Activated B cell treated with CpG ODN at 0.5 μM for 24 hours (primary cell): ENCODE measurements at regions of chr1 and their contacts with region 1.

Region 1: DNA sequence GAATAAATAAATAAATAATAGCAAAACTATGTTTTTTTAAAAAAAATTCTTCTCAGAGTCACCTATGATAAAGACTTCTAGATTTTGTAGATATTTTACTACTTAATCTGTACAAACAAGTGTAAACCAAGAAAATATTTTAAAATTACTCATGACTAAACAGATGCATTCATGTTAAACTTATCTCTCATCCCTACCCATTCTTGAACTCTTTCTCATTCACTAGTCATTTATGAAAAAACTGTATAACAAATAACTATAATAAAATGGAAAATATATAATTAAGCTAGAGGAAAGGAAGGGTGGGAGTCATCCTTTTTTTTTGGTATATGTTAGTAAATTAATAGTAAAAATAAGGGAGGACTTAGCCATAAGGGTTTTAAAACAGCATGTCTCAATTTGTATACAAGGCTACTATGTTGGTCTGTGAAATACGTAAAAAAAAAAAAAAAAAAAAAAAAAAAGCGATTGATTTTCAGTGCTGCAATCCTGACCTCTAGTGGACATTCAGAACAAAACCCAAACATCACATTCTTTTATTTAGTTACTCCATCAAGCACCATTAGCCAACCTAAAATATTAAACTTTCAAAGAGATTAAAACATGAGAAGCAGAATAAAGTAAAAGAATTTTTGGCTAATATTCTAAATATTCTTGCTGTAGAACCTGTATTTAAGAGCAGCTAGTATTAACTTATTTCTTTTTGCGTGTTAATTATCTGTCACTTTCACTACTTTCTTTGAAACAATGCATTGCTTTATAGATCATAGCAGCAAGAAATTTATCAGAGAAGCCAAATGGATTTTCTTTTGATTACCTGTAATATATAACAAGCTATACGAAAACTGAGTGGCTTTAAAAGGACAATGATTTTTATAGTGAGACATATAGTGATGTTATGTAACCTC is 255.8 kb upstream of the CACYBP start:
- DNase-seq: no peak
- ATAC-seq: peak; percentile 31
- H3K4me3 Mint-ChIP-seq: no peak overlapping the region
- H3K27ac Mint-ChIP-seq: no peak overlapping the region
- H3K4me1 Mint-ChIP-seq: peaks cover 38% of the 10 kb centered on the region
- H3K27me3 Mint-ChIP-seq: no peaks in the 10 kb centered on the region
- CTCF ChIP-seq: no peak

Region 2: GRCh38 chr1:173202430-173203145 is 1541.3 kb before region 1 on chr1:
- CTCF ChIA-PET with region 1: no interaction called
- POLR2A ChIA-PET with region 1: no interaction called
- intact Hi-C with region 1: loop called (anchors 10 kb)
- DNase-seq: no peak
- ATAC-seq: no peak
- H3K4me3 Mint-ChIP-seq: no peak overlapping the region
- H3K27ac Mint-ChIP-seq: no peak overlapping the region
- H3K4me1 Mint-ChIP-seq: peaks cover 50% of the 10 kb centered on the region
- H3K27me3 Mint-ChIP-seq: no peaks in the 10 kb centered on the region
- CTCF ChIP-seq: no peak

Region 3: DNA sequence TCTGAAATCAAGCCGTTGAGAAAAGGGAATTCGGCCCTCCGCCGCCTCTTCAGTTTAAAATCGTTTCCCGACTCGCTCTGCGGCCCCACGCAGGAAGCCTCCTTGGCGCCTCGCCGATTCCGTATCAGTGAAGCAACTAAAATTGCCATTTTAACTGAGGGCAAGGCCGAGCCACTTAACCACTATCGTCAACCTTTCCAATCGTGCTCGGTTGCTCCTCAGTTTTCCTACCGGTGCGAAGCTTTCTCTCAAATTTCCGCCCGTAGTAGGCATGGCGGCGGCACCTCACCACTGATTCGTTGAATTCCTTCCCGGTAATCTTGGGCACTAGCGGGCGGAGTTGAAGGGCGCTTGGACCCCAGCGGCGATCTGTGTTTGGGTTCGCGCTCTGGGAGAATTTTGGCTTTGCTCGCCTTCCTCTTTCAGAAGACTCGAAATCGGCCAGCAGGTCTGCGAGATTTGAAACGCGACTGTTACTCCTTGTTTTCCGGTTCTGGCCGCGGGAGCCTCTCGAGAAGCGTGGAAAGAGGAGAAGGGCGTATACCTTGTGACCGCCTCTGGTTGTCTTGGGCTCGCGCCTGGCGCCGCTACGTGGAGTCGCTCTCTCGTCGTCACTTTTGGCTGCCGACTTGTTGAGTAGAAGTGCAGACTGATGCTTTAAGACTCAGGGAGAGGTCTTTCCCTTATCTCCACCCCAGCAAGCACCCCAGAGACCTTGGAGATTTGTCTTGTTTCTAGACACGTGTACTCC is 919.4 kb before region 1 on chr1 and contains the starts of genes CENPL and DARS2:
- CTCF ChIA-PET with region 1: no interaction called
- POLR2A ChIA-PET with region 1: no interaction called
- intact Hi-C with region 1: loop called (anchors 10 kb)
- DNase-seq: peak; percentile 80
- ATAC-seq: peak; percentile 89
- H3K4me3 Mint-ChIP-seq: peak within 1 kb of the TSS; percentile 95
- H3K27ac Mint-ChIP-seq: peak within 1 kb of the TSS; percentile 97
- H3K4me1 Mint-ChIP-seq: peaks cover 28% of the 10 kb centered on the region
- H3K27me3 Mint-ChIP-seq: no peaks in the 10 kb centered on the region
- CTCF ChIP-seq: no peak
- total RNA-seq, gene CENPL: 12.7 and 14.0 TPM in 2 replicates
- total RNA-seq, gene DARS2: 24.0 and 26.0 TPM in 2 replicates

Region 4: GRCh38 chr1:173997796-173998195 is 746.1 kb before region 1 on chr1:
- CTCF ChIA-PET with region 1: no interaction called
- POLR2A ChIA-PET with region 1: no interaction called
- intact Hi-C with region 1: loop called (anchors 10 kb)
- DNase-seq: no peak
- ATAC-seq: no peak
- H3K4me3 Mint-ChIP-seq: no peak overlapping the region
- H3K27ac Mint-ChIP-seq: no peak overlapping the region
- H3K4me1 Mint-ChIP-seq: peaks cover 55% of the 10 kb centered on the region
- H3K27me3 Mint-ChIP-seq: no peaks in the 10 kb centered on the region
- CTCF ChIP-seq: no peak

Region 5: DNA sequence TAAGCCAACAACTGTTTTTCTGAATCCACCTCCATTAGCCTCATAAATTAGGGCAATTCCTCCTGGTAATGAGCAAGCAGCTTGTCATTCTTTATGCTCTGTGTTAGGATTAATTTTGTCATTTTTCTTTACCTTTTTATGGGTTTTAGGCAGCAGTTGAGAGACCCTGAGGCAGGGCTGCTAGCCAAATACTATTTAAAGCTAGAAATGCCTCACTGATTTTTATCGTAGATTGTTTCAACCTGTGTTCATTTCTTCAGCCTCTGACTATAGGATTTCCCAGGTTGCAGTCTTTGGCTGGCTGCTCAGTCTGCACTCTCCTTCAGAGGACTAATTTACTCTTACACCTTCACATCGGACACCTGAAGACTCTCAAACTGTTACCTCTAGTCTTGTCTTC is 646.5 kb before region 1 on chr1:
- CTCF ChIA-PET with region 1: no interaction called
- POLR2A ChIA-PET with region 1: no interaction called
- intact Hi-C with region 1: loop called (anchors 5 kb)
- DNase-seq: no peak
- ATAC-seq: no peak
- H3K4me3 Mint-ChIP-seq: no peak overlapping the region
- H3K27ac Mint-ChIP-seq: no peak overlapping the region
- H3K4me1 Mint-ChIP-seq: no peaks in the 10 kb centered on the region
- H3K27me3 Mint-ChIP-seq: no peaks in the 10 kb centered on the region
- CTCF ChIP-seq: no peak

Region 6: GRCh38 chr1:174262349-174263241 is 481.3 kb before region 1 on chr1:
- CTCF ChIA-PET with region 1: interaction called, 68 read pairs
- POLR2A ChIA-PET with region 1: no interaction called
- intact Hi-C with region 1: loop called (anchors 1 kb)
- DNase-seq: no peak
- ATAC-seq: peak; percentile 70
- H3K4me3 Mint-ChIP-seq: no peak overlapping the region
- H3K27ac Mint-ChIP-seq: no peak overlapping the region
- H3K4me1 Mint-ChIP-seq: peaks cover 25% of the 10 kb centered on the region
- H3K27me3 Mint-ChIP-seq: no peaks in the 10 kb centered on the region
- CTCF ChIP-seq: no peak

Region 7: GRCh38 chr1:174682419-174683008 is 61.4 kb before region 1 on chr1:
- CTCF ChIA-PET with region 1: no interaction called
- POLR2A ChIA-PET with region 1: interaction called, 10 read pairs
- intact Hi-C with region 1: no loop called
- DNase-seq: no peak
- ATAC-seq: no peak
- H3K4me3 Mint-ChIP-seq: no peak overlapping the region
- H3K27ac Mint-ChIP-seq: no peak overlapping the region
- H3K4me1 Mint-ChIP-seq: peaks cover 5% of the 10 kb centered on the region
- H3K27me3 Mint-ChIP-seq: no peaks in the 10 kb centered on the region
- CTCF ChIP-seq: no peak

Region 8: GRCh38 chr1:175237389-175237788 is 493.5 kb after region 1 on chr1:
- CTCF ChIA-PET with region 1: no interaction called
- POLR2A ChIA-PET with region 1: no interaction called
- intact Hi-C with region 1: no loop called
- DNase-seq: no peak
- ATAC-seq: peak; percentile 58
- H3K4me3 Mint-ChIP-seq: peak overlapping the region; percentile 63
- H3K27ac Mint-ChIP-seq: peak overlapping the region; percentile 83
- H3K4me1 Mint-ChIP-seq: peaks cover 67% of the 10 kb centered on the region
- H3K27me3 Mint-ChIP-seq: no peaks in the 10 kb centered on the region
- CTCF ChIP-seq: no peak